ENCODE measurements at regions of chr4 and their contacts with region 1.

Region 1: GRCh38 chr4:147596981-147597380 is 20.2 kb upstream of the TMEM184C start:
- DNase-seq: peak; percentile 67
- H3K4me3 Mint-ChIP-seq: no peak overlapping the region
- H3K27ac Mint-ChIP-seq: peak overlapping the region; percentile 74
- H3K4me1 Mint-ChIP-seq: peaks cover 27% of the 10 kb centered on the region
- H3K27me3 Mint-ChIP-seq: no peaks in the 10 kb centered on the region
- CTCF ChIP-seq: no peak

Region 2: DNA sequence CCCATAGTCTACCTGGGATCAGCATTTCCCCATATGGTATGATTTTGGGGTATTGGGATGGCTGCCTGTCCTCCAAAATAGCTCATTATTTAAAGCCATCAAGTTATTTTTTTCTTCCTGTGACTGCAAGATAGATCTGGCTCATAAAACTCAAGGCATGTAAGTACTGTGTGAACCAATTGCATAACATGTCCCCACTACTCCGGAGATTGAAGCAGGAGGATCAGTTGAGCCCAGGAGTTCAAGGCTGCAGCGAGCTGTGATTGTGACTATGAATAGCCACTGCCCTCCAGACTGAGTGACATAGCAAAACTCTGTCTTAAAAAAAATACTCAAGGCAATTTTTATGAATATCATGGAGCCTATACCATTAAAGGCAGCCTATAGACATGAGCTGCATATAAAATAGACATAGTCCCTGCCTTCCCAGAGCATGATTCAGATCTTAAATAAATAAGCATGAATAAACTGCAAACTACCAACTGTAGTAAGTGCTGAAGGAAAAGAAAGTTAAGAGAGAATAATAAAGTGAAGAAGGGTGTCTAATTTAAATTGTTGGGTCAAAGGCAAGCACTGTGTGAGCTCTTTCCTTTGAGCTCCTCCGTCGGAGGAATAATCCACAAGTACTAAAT is 1994.7 kb before region 1 on chr4:
- CTCF ChIA-PET with region 1: no interaction called
- intact Hi-C with region 1: no loop called
- DNase-seq: no peak
- H3K4me3 Mint-ChIP-seq: no peak overlapping the region
- H3K27ac Mint-ChIP-seq: no peak overlapping the region
- H3K4me1 Mint-ChIP-seq: no peaks in the 10 kb centered on the region
- H3K27me3 Mint-ChIP-seq: no peaks in the 10 kb centered on the region
- CTCF ChIP-seq: no peak

Region 3: DNA sequence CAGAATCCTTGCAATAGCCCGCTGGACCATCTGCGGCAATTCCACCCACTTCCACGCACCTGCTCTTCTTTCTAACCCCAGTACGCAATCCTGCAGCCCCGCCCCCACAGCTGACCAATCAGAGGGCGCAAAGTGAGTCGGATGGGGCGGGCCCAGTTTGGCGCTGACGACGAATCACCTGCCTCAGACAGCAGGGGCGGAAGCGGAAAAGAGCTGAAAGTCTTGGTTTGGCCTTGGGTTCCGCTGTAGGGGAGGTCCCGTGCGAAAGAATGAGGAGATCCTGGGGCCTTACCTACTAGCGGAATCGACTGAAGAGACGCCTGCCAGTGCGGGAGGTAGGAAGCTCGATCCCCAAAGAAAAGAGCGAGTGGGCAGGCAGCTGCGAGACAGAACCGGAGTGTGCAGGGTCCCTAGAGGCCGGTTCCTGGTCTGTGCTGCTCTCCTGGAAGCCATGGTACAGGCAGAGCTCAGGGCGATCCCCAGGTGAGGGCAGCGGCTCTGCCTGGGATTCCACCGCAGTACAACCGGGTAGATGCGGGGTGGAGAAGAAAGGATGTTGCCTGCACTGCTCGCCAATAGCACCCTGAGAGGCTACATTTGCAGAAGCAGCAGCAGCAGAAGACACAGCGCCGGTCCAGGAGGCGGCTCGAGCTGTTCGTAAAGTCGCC is 20.3 kb after region 1 on chr4 and contains the start of gene TMEM184C:
- CTCF ChIA-PET with region 1: interaction called, 7 read pairs
- intact Hi-C with region 1: loop called (anchors 2 kb)
- DNase-seq: peak; percentile 96
- H3K4me3 Mint-ChIP-seq: peak within 1 kb of the TSS; percentile 87
- H3K27ac Mint-ChIP-seq: peak within 1 kb of the TSS; percentile 83
- H3K4me1 Mint-ChIP-seq: peaks cover 20% of the 10 kb centered on the region
- H3K27me3 Mint-ChIP-seq: no peaks in the 10 kb centered on the region
- CTCF ChIP-seq: no peak
- total RNA-seq, gene TMEM184C: 23.3 and 30.1 TPM in 2 replicates

Region 4: DNA sequence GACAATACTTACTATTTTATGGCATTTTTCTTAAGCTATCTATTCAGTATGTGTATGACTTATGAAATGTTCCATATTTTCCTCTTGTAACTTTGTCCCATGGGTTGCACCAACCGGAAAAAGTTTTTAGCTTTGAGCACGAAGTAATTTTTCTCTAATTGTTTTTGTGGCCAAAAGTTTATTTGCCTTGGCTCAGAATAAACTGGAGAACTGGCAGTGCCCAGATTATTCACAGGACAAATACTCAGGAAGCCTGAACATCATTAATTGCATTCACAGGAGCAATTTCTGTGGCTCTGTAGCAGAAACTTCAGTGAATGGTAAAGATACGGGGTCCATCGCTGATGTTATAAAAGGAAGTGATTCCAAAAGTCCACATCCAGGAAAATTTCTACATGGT is 319.4 kb after region 1 on chr4:
- CTCF ChIA-PET with region 1: no interaction called
- intact Hi-C with region 1: no loop called
- DNase-seq: no peak
- H3K4me3 Mint-ChIP-seq: no peak overlapping the region
- H3K27ac Mint-ChIP-seq: no peak overlapping the region
- H3K4me1 Mint-ChIP-seq: no peaks in the 10 kb centered on the region
- H3K27me3 Mint-ChIP-seq: no peaks in the 10 kb centered on the region
- CTCF ChIP-seq: no peak

Region 5: GRCh38 chr4:148076964-148077363 is 480.0 kb after region 1 on chr4:
- CTCF ChIA-PET with region 1: no interaction called
- intact Hi-C with region 1: no loop called
- DNase-seq: no peak
- H3K4me3 Mint-ChIP-seq: no peak overlapping the region
- H3K27ac Mint-ChIP-seq: no peak overlapping the region
- H3K4me1 Mint-ChIP-seq: no peaks in the 10 kb centered on the region
- H3K27me3 Mint-ChIP-seq: no peaks in the 10 kb centered on the region
- CTCF ChIP-seq: no peak

Measured in Calu3 (cell line).